MCF 10A (cell line): ENCODE measurements at regions of chr1 and their contacts with region 1.

Region 1: DNA sequence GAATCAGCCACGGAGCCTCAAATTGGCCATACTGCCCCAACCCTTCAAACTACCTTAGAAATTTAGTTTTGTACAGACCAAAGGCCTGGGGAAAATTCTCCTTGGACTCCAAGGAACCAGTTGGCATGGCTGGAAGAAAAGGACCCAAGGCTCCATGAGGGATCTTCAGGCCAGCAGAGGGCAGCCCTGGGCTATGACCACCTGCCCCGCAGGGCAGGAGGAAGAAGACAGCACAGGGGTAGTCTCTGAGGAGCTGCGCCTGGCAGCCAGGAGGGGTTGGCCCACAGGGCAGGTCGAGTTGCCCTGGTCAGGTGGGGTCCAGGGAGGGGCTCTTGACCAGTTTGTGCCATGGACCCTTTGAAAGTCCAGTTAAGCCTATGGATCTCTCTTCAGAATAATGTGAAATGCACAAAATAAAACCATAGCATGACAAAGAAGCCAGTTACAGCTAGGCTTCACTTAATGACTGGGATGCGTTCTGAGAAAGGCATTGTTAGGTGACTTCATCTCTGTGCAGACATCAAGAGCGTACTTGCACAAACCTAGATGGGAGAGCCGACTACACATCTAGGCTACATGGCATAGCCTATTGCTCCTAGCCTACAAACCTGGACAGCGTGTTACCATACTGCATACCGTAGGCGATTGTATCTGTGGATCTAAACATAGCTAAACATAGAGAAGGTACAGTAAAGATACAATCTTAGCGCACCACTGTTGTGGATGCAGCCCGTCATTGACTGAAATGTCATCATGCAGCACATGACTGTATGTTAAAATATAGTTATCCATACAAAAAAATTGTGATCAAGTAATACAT is 26.1 kb downstream of the CACNA1S start:
- DNase-seq: peak; percentile 82
- H3K4me3 Mint-ChIP-seq: no peak overlapping the region
- H3K27ac Mint-ChIP-seq: no peak overlapping the region
- H3K4me1 Mint-ChIP-seq: peaks cover 7% of the 10 kb centered on the region
- H3K27me3 Mint-ChIP-seq: peaks cover 31% of the 10 kb centered on the region
- CTCF ChIP-seq: peak; percentile 95

Region 2: DNA sequence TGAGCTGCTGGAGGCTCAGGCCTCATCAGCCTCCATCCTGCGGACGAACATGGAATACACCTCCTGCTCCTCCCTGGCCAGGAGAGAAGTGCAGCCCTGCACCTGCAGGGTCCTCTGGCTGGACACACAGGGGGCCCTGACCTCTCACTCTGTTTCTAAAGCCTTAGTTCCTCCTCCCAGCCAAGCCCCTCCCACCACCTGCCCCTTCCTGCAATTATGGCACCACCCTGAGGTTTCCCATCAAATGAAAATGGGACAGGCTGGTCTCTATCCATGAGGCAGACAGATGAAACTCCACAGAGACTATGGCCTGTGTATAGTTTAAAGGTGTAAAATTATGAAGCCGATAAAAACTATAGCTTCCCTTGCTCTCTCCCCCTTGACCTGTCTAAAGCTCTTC is 16.5 kb before region 1 on chr1:
- CTCF ChIA-PET with region 1: interaction called, 12 read pairs
- POLR2A ChIA-PET with region 1: interaction called, 3 read pairs
- intact Hi-C with region 1: no loop called
- DNase-seq: peak; percentile 26
- H3K4me3 Mint-ChIP-seq: no peak overlapping the region
- H3K27ac Mint-ChIP-seq: no peak overlapping the region
- H3K4me1 Mint-ChIP-seq: peaks cover 7% of the 10 kb centered on the region
- H3K27me3 Mint-ChIP-seq: peaks cover 49% of the 10 kb centered on the region
- CTCF ChIP-seq: no peak

Region 3: DNA sequence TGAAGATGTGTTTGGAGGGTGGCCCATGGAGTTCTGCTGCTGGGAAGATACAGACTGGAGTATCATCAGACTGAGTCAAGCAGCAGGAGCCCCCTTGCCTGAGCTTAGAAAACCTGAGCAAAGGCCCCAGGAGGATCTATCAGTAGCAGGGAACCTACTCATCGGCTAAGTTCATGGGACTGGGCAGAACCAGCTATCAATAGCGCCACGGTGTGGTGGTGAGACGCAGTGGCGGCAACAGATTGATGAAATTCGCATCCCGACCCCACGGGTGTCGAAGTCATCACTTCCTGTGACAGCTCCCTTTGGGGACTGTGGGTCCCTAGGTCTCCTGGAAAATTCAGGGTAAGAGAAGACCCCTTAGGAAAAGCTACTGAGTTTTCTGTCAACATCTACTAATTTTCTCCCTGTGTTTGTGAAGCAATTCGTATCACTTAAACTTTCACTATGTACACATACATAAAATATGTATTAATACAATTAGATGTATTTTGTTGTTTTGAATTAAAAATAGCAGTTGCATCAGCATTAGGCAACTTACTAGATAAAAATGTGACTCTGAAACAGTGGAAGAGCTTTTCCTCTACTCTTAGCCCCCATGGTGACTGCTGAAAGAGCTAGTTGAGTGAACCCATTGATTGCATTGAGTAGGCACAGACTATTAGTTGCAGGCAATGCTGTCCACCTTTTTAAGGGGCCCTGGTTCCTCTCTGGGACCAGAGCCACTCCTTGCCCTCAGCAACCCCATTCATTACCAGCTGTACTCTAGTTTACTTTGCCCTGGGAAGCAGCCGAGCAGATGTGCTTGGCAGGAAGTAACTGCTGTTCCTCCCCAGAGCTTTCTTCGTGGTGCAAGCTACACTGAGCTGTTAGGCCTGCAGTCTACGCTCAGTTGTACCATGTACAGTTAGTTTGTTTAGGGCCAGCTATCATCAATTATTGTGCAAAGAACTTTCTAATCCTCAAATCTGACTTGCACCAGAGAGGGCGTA is 33.4 kb after region 1 on chr1:
- CTCF ChIA-PET with region 1: interaction called, 54 read pairs
- POLR2A ChIA-PET with region 1: interaction called, 3 read pairs
- intact Hi-C with region 1: loop called (anchors 1 kb)
- DNase-seq: no peak
- H3K4me3 Mint-ChIP-seq: no peak overlapping the region
- H3K27ac Mint-ChIP-seq: no peak overlapping the region
- H3K4me1 Mint-ChIP-seq: peaks cover 9% of the 10 kb centered on the region
- H3K27me3 Mint-ChIP-seq: no peaks in the 10 kb centered on the region
- CTCF ChIP-seq: no peak